ENCODE measurements at regions of chr3 and their contacts with region 1.

Region 1: DNA sequence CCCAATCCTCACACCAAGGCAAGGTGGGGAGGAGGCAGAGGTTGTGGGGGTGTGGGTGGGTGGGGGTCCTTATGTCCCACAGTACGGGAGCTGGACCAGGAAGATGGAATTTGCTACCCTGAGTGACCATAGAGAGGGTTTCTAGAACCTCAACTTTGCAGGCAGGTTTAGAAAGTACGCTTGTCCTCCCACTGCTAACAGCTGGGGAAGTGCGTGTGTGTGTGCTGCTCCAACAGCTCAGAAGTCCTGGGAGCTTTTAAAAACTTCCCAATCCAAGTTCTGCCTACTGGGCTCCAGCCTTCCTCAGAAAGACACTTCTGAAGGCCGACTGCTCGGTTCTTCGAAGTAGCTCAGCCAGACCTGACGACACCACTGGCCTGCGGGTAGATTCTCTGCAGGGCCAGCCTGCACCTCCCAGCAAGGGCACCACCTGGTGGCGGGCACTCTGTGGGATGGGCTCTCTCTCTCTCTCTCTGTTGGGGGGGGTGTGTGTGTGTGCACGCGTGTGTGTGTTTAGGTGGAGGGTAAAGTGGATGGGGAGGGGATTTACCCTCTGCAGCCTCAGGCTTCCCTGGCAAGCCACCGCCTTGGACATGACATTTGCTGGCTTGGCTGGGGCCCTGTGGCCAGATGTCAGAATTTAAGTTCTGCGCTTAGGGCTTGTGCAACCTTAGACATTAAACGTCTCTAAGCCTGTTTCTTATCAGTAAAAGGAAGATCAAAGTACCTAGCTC is 15.6 kb downstream of the TMEM158 start:
- DNase-seq: peak; percentile 84 to 96
- H3K4me3 ChIP-seq: no peak overlapping the region
- CTCF ChIP-seq: peak in 1 of 3 donors; percentile 63
- POLR2A ChIP-seq: no peak

Region 2: DNA sequence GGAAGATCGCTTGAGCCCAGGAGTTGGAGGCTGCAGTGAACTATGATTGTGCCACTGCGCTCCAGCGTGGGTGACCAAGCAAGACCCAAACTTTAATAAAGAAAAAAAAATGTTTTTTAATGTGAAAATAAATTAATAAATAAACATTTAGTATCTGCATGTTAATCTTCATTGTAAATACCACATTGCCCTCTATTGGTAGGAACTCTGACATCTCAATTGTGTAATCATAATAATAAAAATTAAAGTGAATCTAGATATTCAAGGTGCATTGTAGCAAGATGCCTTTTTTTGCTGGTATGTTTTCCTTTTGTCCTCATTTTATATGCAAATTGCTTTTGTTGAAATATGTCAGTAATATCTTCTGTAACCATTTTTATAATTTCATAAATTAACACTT is 289.1 kb after region 1 on chr3:
- intact Hi-C with region 1: loop called (anchors 10 kb)
- DNase-seq: no peak
- H3K4me3 ChIP-seq: no peak overlapping the region
- CTCF ChIP-seq: no peak
- POLR2A ChIP-seq: no peak

Region 3: GRCh38 chr3:46585799-46586693 is 1375.6 kb after region 1 on chr3:
- intact Hi-C with region 1: no loop called
- DNase-seq: no peak
- H3K4me3 ChIP-seq: no peak overlapping the region
- CTCF ChIP-seq: no peak
- POLR2A ChIP-seq: no peak